Activated naive CD4-positive, alpha-beta T cell treated with anti-CD3 and anti-CD28 coated beads for 36 hours (primary cell): ENCODE measurements at regions of chr5 and their contacts with region 1.

Region 1: GRCh38 chr5:59799668-59800346 is 93.7 kb downstream of the PDE4D start:
- DNase-seq: peak; percentile 30
- H3K4me3 Mint-ChIP-seq: no peak overlapping the region
- H3K27ac Mint-ChIP-seq: no peak overlapping the region
- H3K4me1 Mint-ChIP-seq: no peaks in the 10 kb centered on the region
- H3K27me3 Mint-ChIP-seq: peaks cover 7% of the 10 kb centered on the region

Region 2: GRCh38 chr5:59506285-59506877 is 293.4 kb before region 1 on chr5:
- CTCF ChIA-PET with region 1: interaction called, 15 read pairs
- intact Hi-C with region 1: loop called (anchors 1 kb)
- DNase-seq: no peak
- H3K4me3 Mint-ChIP-seq: no peak overlapping the region
- H3K27ac Mint-ChIP-seq: no peak overlapping the region
- H3K4me1 Mint-ChIP-seq: no peaks in the 10 kb centered on the region
- H3K27me3 Mint-ChIP-seq: no peaks in the 10 kb centered on the region

Region 3: DNA sequence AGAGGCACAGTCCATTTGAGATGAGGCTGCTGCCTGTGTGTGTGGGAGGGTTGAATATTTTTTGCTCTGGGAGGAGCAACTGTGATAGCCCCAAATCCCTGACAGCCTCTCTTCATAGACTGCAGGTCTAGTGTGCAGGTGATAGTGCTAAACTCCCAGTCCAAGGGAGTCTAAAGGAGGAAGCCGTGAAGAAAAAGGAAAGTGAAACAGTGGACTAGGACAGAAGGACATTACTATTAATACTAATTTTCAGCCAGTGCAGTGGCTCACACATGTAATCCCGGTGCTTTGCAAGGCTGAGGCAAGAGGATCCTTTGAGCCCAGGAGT is 201.3 kb before region 1 on chr5:
- CTCF ChIA-PET with region 1: no interaction called
- intact Hi-C with region 1: loop called (anchors 10 kb)
- DNase-seq: no peak
- H3K4me3 Mint-ChIP-seq: no peak overlapping the region
- H3K27ac Mint-ChIP-seq: no peak overlapping the region
- H3K4me1 Mint-ChIP-seq: no peaks in the 10 kb centered on the region
- H3K27me3 Mint-ChIP-seq: peaks cover 10% of the 10 kb centered on the region

Region 4: GRCh38 chr5:59673438-59674058 is 126.3 kb before region 1 on chr5:
- CTCF ChIA-PET with region 1: interaction called, 3 read pairs
- intact Hi-C with region 1: loop called (anchors 1 kb)
- DNase-seq: no peak
- H3K4me3 Mint-ChIP-seq: no peak overlapping the region
- H3K27ac Mint-ChIP-seq: no peak overlapping the region
- H3K4me1 Mint-ChIP-seq: no peaks in the 10 kb centered on the region
- H3K27me3 Mint-ChIP-seq: no peaks in the 10 kb centered on the region

Region 5: GRCh38 chr5:59724482-59725391 is 75.1 kb before region 1 on chr5:
- CTCF ChIA-PET with region 1: interaction called, 5 read pairs
- intact Hi-C with region 1: loop called (anchors 1 kb)
- DNase-seq: peak; percentile 47
- H3K4me3 Mint-ChIP-seq: no peak overlapping the region
- H3K27ac Mint-ChIP-seq: no peak overlapping the region
- H3K4me1 Mint-ChIP-seq: peaks cover 3% of the 10 kb centered on the region
- H3K27me3 Mint-ChIP-seq: peaks cover 4% of the 10 kb centered on the region

Region 6: GRCh38 chr5:60352992-60353599 is 553.3 kb after region 1 on chr5:
- CTCF ChIA-PET with region 1: no interaction called
- intact Hi-C with region 1: no loop called
- DNase-seq: no peak
- H3K4me3 Mint-ChIP-seq: no peak overlapping the region
- H3K27ac Mint-ChIP-seq: no peak overlapping the region
- H3K4me1 Mint-ChIP-seq: no peaks in the 10 kb centered on the region
- H3K27me3 Mint-ChIP-seq: no peaks in the 10 kb centered on the region